H1 (cell line): ENCODE measurements at regions of chr13 and their contacts with region 1.

Region 1: GRCh38 chr13:23760000-23760399 is 129.2 kb downstream of the MIPEP start:
- DNase-seq: no peak
- H3K4me3 ChIP-seq: no peak overlapping the region
- H3K27ac ChIP-seq: no peak overlapping the region
- H3K4me1 ChIP-seq: no peaks in the 10 kb centered on the region; a peak in 2 of 7 replicates
- H3K27me3 ChIP-seq: no peaks in the 10 kb centered on the region
- CTCF ChIP-seq: no peak
- EP300 ChIP-seq: no peak
- POLR2A ChIP-seq: no peak
- RAD21 ChIP-seq: no peak

Region 2: GRCh38 chr13:23349161-23349897 is 410.7 kb before region 1 on chr13:
- CTCF ChIA-PET with region 1: no interaction called
- POLR2A ChIA-PET with region 1: no interaction called
- DNase-seq: no peak
- H3K4me3 ChIP-seq: no peak overlapping the region
- H3K27ac ChIP-seq: no peak overlapping the region
- H3K4me1 ChIP-seq: no peaks in the 10 kb centered on the region
- H3K27me3 ChIP-seq: no peaks in the 10 kb centered on the region
- CTCF ChIP-seq: no peak
- EP300 ChIP-seq: no peak
- POLR2A ChIP-seq: no peak
- RAD21 ChIP-seq: no peak

Region 3: DNA sequence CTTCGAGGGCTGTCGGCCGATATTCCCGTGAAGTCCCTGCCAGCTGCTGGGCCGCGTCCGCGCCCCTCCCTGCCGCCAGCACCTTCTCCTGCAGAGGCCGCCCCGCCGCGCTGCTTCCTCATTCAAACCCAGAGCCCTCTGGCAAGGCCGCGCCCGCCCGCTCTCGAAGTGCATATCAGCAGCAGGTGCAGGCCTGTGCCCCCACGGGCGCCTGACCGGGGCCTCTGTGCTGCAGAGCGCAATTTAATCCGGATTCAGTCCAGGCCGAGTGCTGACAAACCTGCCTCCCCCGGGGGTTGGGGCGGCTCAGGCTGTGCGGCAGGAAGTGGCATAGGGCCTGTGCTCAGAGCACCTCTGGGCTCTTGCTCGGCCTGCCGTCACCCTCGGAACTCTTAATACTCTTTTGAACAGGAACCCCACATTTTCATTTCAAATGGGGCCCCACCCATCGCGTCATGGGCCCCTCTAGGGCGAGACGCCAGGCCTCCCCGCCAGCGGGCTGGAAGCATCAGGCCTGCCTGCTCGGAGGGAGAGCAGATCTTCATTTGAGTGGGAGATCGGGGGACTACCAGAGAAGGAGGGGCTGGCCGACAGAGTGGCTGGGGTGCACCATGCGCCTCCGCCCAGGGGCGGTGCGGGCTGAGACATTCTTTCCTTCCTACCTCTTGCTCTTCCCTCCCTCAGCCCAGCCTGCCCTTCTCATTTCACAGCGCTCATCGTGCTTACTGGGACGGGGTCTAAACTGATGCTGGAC is 64.1 kb before region 1 on chr13:
- CTCF ChIA-PET with region 1: no interaction called
- POLR2A ChIA-PET with region 1: no interaction called
- DNase-seq: no peak
- H3K4me3 ChIP-seq: no peak overlapping the region
- H3K27ac ChIP-seq: no peak overlapping the region
- H3K4me1 ChIP-seq: peaks cover 4 to 11% (median 7%) of the 10 kb centered on the region in 4 experiments
- H3K27me3 ChIP-seq: no peaks in the 10 kb centered on the region
- CTCF ChIP-seq: no peak
- EP300 ChIP-seq: no peak
- POLR2A ChIP-seq: no peak
- RAD21 ChIP-seq: no peak

Region 4: GRCh38 chr13:23771552-23771951 is 11.6 kb after region 1 on chr13:
- CTCF ChIA-PET with region 1: interaction called, 10 read pairs
- POLR2A ChIA-PET with region 1: interaction called, 3 read pairs
- DNase-seq: no peak
- H3K4me3 ChIP-seq: no peak overlapping the region
- H3K27ac ChIP-seq: no peak overlapping the region
- H3K4me1 ChIP-seq: no peaks in the 10 kb centered on the region
- H3K27me3 ChIP-seq: no peaks in the 10 kb centered on the region
- CTCF ChIP-seq: no peak
- EP300 ChIP-seq: no peak
- POLR2A ChIP-seq: no peak
- RAD21 ChIP-seq: no peak

Region 5: GRCh38 chr13:23788459-23788858 is 28.5 kb after region 1 on chr13:
- CTCF ChIA-PET with region 1: no interaction called
- POLR2A ChIA-PET with region 1: no interaction called
- DNase-seq: no peak
- H3K4me3 ChIP-seq: no peak overlapping the region
- H3K27ac ChIP-seq: no peak overlapping the region
- H3K4me1 ChIP-seq: peaks cover 0 to 3% (median 0%) of the 10 kb centered on the region in 4 experiments; a peak in 1 of 7 replicates
- H3K27me3 ChIP-seq: no peaks in the 10 kb centered on the region
- CTCF ChIP-seq: no peak
- EP300 ChIP-seq: no peak
- POLR2A ChIP-seq: no peak
- RAD21 ChIP-seq: no peak